Cardiac septum (tissue), 1 donor: ENCODE measurements at regions of chr16 and their contacts with region 1.

Region 1: GRCh38 chr16:75234856-75235696 is 16.3 kb downstream of the CTRB1 start:
- DNase-seq: no peak

Region 2: GRCh38 chr16:75198135-75198600 is 36.9 kb before region 1 on chr16:
- intact Hi-C with region 1: loop called (anchors 5 kb)
- DNase-seq: peak; percentile 68

Region 3: GRCh38 chr16:75218256-75219070 is 16.6 kb before region 1 on chr16 and contains the start of gene CTRB1:
- intact Hi-C with region 1: no loop called
- DNase-seq: no peak
- total RNA-seq, gene CTRB1: not detected

Region 4: DNA sequence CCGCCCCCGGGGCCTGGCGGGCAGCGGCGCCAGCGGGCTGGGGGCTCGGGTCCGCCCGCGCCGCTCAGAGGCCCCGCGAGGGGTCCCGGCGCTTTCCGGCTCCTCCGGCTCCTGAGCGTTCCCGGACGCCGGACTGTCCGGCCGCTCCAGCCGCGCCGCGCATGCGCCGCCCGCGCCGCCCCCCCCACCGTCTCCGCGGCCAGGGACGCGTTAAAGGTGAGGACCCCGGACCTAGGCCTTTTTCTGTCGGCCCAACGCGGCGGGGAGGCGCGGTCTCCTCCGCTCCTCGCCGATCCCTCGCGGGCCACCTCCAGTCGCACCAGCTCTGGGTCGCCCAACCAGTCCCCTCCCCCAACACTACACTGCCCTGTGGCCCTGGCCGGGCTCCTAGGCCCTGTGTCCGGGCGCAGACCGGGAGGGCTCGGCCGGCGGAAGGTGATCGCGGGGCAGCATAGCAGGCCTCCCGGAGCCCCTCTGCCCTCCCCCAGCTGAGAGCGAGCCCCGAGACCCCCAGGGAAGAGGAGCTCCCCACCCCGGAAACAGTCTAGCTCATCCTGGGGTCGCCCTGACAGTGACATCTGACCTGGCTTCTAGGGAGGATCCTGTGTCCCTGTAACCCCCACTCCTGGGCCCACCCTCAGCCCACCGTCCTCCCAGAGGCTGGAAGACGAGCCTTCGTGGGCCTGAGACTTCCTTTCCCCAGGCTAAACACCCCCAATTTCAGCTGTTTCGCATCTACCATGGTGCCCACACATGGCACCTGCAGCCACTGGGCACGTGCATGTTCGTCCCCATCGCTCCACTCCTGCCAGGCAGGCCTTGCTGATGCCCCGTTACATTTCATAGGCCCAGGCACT is 31.0 kb after region 1 on chr16:
- intact Hi-C with region 1: loop called (anchors 5 kb)
- DNase-seq: no peak

Region 5: GRCh38 chr16:75305364-75306098 is 70.5 kb after region 1 on chr16:
- intact Hi-C with region 1: loop called (anchors 2 kb)
- DNase-seq: peak; percentile 80

Region 6: GRCh38 chr16:75385507-75386152 is 150.6 kb after region 1 on chr16:
- intact Hi-C with region 1: loop called (anchors 2 kb)
- DNase-seq: no peak

Region 7: GRCh38 chr16:75402821-75403475 is 167.9 kb after region 1 on chr16:
- intact Hi-C with region 1: loop called (anchors 5 kb)
- DNase-seq: no peak

Region 8: DNA sequence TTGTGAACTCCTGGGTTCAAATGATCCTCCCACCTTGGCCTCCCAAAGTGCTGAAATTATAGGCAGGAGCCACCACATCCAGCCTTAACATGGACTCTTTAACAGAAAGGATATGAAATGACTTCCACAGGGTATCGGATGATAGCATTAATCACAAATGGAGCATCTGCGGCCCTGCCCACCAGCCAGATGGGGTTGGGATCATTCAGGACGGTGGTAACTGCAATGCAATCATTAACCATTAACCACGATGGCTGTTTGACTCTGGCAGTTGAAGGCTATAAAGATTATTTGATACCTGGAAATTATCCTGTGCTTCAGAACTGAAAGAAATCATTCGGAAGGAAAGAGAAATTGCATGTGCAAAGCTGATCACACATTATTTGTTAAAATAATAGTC is 306.2 kb after region 1 on chr16:
- intact Hi-C with region 1: no loop called
- DNase-seq: no peak